ENCODE measurements at regions of chr5 and their contacts with region 1.

Region 1: DNA sequence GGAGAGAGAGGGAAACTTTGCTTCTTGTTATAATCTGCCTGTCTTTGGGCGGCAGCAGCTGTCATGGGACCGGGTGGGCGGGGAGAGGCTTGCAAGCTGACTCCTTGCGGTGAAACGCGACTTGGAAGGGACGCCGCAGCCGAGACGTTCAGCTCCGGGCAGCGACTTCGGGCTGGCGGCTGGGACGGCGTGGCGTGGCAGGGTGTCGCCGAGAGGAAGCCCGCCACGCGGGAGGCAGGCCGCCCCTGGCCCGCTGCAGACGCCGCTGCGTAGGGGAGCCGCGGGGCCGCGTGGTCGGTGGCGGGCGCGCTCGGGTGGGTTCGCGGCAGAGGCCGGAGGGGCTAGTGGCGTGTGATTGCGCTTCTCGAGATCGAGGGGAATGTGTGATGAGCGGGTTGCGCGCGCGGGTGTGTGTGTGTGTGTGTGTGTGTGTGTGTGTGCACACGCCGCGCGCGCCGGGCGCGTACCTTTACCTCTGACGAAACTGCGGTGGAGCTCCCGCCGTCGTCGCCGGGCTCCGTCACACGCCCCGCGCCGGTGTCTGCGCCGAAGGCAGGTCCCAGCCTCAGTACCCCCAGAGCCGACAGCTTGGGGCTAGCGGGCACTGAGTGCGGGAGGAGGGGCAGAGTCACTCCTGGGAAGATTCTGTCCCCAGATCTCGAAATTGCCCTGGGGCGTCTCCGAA is 1.7 kb downstream of the PPARGC1B start:
- DNase-seq: peak; percentile 96
- ATAC-seq: peak; percentile 64 to 68
- H3K4me3 ChIP-seq: peak overlapping the region; percentile 86 to 98 (median 94)
- H3K27ac ChIP-seq: peak overlapping the region; percentile 98 to 99 (median 99)
- H3K4me1 ChIP-seq: peaks cover 18 to 30% of the 10 kb centered on the region in 2 donors
- H3K27me3 ChIP-seq: no peaks in the 10 kb centered on the region
- CTCF ChIP-seq: peak in 1 of 5 experiments; percentile 14
- POLR2A ChIP-seq: peak; percentile 82 to 89

Region 2: GRCh38 chr5:149749481-149750365 is 17.9 kb after region 1 on chr5:
- in situ Hi-C with region 1: no loop called
- intact Hi-C with region 1: loop called (anchors 1 kb)
- DNase-seq: no peak
- ATAC-seq: peak; percentile 25 to 34
- H3K4me3 ChIP-seq: no peak overlapping the region
- H3K27ac ChIP-seq: peak overlapping the region; percentile 84 to 99 (median 92)
- H3K4me1 ChIP-seq: peaks cover 47 to 58% of the 10 kb centered on the region in 2 donors
- H3K27me3 ChIP-seq: no peaks in the 10 kb centered on the region
- CTCF ChIP-seq: no peak
- POLR2A ChIP-seq: no peak

Region 3: DNA sequence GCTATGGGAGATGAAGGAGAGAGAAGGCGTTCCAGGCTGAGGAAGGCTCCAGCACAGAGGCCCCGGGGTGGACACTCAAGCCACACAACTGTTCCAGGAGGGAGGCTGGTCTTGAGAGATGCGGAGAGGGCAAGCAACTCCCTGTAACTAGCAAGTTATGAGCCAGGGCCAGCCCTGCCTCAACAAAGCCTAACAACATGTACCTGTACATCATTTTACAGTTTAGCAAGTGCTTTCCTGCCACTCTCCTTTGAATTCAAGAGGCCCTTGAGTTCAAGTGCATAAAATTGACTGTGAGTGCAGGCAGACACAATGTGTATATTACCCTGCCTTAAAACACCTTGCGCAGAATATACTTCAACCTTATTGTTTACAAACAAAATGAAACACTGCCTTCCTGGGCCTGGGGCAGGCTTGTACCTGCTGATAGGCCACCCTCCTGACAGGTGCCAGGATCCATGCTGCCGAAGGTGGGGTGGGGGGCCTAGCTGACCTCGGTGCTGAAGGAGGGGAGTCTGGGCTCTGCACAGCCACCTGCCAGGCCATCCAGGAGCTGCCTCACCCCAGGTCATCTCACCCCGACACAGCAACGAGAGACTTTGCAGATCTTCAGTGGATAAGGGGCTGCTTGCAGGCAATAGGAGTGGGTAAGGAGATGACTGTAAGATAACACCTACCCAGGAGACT is 78.3 kb after region 1 on chr5:
- in situ Hi-C with region 1: loop called in 1 of 4 experiments (anchors 10 kb)
- intact Hi-C with region 1: loop called (anchors 1 kb)
- DNase-seq: no peak
- ATAC-seq: no peak
- H3K4me3 ChIP-seq: no peak overlapping the region
- H3K27ac ChIP-seq: peak overlapping the region; percentile 79 to 98 (median 96)
- H3K4me1 ChIP-seq: peaks cover 79 to 80% of the 10 kb centered on the region in 2 donors
- H3K27me3 ChIP-seq: no peaks in the 10 kb centered on the region
- CTCF ChIP-seq: no peak
- POLR2A ChIP-seq: no peak

Region 4: DNA sequence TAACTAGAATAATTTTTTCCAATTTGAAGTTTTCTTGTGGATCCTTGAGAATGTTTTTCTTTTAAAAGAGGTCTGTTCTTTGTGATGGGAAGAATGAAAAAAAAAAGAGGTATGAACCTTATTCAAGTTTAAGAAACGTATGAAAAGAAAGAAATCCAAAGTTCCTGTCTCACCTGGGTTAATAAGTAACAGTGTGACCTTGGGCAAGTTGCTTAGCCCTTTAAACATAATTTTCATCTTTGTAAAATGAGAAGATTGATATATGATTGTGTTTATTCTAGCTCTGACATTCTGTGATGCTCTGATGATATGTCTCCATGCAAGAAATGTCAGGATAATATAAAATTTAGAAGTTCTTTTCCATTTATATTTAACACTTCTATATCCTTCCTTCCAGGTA is 248.1 kb after region 1 on chr5:
- in situ Hi-C with region 1: no loop called
- intact Hi-C with region 1: no loop called
- DNase-seq: no peak
- ATAC-seq: no peak
- H3K4me3 ChIP-seq: no peak overlapping the region
- H3K27ac ChIP-seq: no peak overlapping the region
- H3K4me1 ChIP-seq: no peaks in the 10 kb centered on the region
- H3K27me3 ChIP-seq: no peaks in the 10 kb centered on the region
- CTCF ChIP-seq: no peak
- POLR2A ChIP-seq: no peak

Region 5: DNA sequence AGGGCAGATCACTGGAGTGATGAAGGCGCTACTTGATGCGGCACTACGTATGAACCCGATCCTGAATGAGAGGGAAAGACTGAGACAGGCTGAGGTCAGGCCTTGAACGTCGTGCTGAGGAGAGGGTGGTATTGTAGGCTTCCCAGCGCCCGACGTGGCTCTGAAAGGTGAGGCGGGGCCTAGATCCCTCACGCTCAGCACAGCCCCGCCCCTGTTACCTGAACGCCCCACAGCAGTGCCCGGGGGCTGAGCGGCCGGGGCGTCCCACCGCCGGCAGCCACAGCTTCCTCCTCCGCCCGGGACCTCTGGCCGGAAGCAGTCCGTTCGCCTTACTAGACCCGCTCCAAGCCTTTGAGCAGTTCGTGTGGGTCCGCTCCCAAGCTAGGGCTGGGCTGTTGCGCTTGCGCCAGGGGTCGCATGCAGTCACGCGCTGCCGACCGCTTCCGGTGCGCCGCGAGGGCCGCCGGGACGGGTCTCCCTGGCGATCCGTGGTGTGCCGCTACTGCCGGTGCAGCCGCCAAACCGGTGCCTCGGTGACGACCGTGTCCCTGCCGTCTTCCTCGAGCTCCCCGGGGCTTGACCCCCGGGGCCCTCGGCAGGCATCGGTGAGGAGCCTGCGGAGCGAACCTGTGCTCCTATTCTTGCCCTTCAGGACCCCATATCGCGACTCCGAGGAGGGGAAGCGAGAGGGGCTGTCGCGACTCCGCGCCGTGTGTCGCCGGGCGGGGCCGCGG is 268.6 kb after region 1 on chr5 and contains the starts of genes HMGXB3 and TIGD6:
- in situ Hi-C with region 1: no loop called
- intact Hi-C with region 1: loop called (anchors 5 kb)
- DNase-seq: peak; percentile 92 to 94
- ATAC-seq: peak; percentile 89 to 93
- H3K4me3 ChIP-seq: peak within 1 kb of the TSS; percentile 78 to 100 (median 94)
- H3K27ac ChIP-seq: peak within 1 kb of the TSS; percentile 95 to 98 (median 96)
- H3K4me1 ChIP-seq: peaks cover 31% of the 10 kb centered on the region in 2 donors
- H3K27me3 ChIP-seq: no peaks in the 10 kb centered on the region
- CTCF ChIP-seq: peak in 1 of 5 experiments; percentile 21
- POLR2A ChIP-seq: peak; percentile 86 to 90
- total RNA-seq, gene HMGXB3: 19.7 to 27.0 (median 23.9) TPM
- total RNA-seq, gene TIGD6: 0.62 to 3.0 (median 2.3) TPM

Region 6: GRCh38 chr5:150377964-150378694 is 646.3 kb after region 1 on chr5:
- in situ Hi-C with region 1: no loop called
- intact Hi-C with region 1: no loop called
- DNase-seq: no peak
- ATAC-seq: no peak
- H3K4me3 ChIP-seq: no peak overlapping the region
- H3K27ac ChIP-seq: no peak overlapping the region
- H3K4me1 ChIP-seq: no peaks in the 10 kb centered on the region
- H3K27me3 ChIP-seq: no peaks in the 10 kb centered on the region
- CTCF ChIP-seq: no peak
- POLR2A ChIP-seq: no peak

Measured in gastrocnemius medialis (tissue), 4 donors.